Endothelial cell of umbilical vein (primary cell): ENCODE measurements at regions of chr10 and their contacts with region 1.

Region 1: GRCh38 chr10:84537447-84537931 is 209.1 kb downstream of the CCSER2 start:
- DNase-seq: peak; percentile 70
- H3K4me3 ChIP-seq: no peak overlapping the region
- H3K27ac ChIP-seq: no peak overlapping the region
- H3K4me1 ChIP-seq: peaks cover 13% of the 10 kb centered on the region
- H3K27me3 ChIP-seq: no peaks in the 10 kb centered on the region
- CTCF ChIP-seq: peak; percentile 57 to 66
- POLR2A ChIP-seq: no peak

Region 2: DNA sequence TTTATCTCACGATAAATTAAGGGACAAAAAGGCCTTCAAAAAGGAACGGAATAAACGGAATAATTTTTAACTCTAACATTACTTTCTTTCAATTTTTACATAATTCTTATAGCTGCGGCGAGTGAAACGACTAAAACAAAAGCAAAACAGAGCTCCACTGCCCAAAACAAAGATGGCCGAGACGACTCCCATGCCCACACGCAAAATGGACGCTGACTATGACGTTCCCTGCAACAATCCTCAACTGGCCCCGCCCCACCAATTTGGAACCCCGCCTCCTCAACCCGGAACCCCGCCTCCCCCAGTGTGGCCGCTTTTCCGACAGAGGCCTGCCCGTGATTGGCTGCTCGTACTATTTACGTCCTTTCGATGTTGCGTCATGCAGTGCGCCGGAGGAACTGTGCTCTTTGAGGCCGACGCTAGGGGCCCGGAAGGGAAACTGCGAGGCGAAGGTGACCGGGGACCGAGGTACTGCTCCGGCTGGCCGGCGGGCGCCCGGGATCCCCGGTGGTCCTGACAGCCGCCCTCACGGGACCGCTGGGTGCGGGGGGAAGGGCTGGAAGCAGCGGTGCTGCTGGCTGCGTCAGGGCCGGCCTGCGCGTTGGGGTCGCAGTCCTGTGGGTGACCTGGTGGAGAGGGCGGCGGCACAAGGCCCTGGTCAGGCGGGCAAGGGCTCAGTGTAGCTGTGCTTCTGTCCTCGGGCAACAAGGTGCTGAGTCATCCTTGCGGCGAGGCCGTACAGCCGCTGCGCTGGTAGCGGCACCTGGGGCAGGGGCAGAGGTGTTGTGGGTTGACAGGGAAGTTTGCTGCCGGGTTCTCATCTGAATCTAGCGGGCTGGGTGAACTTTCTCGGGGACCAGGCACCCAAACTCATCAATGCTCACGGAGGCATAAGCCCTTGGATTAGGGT is 398.1 kb before region 1 on chr10 and contains the start of gene GHITM:
- CTCF ChIA-PET with region 1: interaction called, 3 read pairs
- POLR2A ChIA-PET with region 1: no interaction called
- dilution Hi-C with region 1: no loop called
- intact Hi-C with region 1: loop called (anchors 5 kb)
- DNase-seq: peak; percentile 99
- H3K4me3 ChIP-seq: peak within 1 kb of the TSS; percentile 68 to 92 (median 71)
- H3K27ac ChIP-seq: peak within 1 kb of the TSS; percentile 78
- H3K4me1 ChIP-seq: peaks cover 12% of the 10 kb centered on the region
- H3K27me3 ChIP-seq: peaks cover 0 to 2% of the 10 kb centered on the region in 2 experiments
- CTCF ChIP-seq: peak; percentile 11 to 54
- POLR2A ChIP-seq: peak; percentile 63
- total RNA-seq, gene GHITM: 113 and 114 TPM in 2 replicates

Region 3: DNA sequence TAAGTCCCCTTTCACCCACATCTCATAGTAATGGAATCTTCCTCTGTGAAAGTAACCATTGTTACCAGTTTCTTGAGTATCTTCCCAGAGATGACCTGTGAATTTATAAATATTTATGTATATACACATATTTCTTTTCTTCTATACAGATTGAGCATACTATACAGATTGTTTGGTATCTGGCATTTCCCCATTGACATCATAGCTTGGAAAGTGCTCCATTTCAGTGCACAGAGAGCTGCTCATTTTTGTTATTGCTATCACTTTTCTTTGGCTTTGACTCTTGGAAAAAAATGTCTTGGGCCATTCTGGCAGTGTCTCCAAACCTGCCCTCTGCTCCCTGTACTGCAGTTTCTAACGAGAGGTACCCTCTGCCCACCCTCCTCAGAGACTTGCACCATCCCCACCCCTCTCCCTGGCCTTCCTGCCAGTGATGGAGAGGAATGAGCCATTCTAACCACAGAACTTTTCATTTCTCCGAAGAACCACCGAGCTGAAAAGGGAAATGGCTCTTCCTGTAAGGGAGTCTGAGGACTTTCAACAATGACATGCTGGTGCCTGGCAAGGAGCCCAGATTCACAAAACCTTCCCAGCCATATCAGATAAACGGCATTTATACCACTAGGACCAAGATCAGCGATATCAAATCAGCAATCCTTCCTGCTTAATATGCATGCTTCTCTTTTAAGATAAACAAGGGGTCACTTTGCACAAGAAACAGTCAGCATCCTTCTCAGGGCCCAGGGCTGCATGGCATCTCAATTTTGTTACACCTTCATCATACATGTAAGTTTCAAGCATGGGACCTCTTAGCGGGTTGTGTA is 228.8 kb before region 1 on chr10:
- CTCF ChIA-PET with region 1: interaction called, 11 read pairs
- POLR2A ChIA-PET with region 1: no interaction called
- dilution Hi-C with region 1: no loop called
- intact Hi-C with region 1: no loop called
- DNase-seq: peak; percentile 93
- H3K4me3 ChIP-seq: peak overlapping the region in 1 of 3 experiments; percentile 10
- H3K27ac ChIP-seq: peak overlapping the region; percentile 84
- H3K4me1 ChIP-seq: peaks cover 35% of the 10 kb centered on the region
- H3K27me3 ChIP-seq: no peaks in the 10 kb centered on the region
- CTCF ChIP-seq: no peak
- POLR2A ChIP-seq: no peak

Region 4: DNA sequence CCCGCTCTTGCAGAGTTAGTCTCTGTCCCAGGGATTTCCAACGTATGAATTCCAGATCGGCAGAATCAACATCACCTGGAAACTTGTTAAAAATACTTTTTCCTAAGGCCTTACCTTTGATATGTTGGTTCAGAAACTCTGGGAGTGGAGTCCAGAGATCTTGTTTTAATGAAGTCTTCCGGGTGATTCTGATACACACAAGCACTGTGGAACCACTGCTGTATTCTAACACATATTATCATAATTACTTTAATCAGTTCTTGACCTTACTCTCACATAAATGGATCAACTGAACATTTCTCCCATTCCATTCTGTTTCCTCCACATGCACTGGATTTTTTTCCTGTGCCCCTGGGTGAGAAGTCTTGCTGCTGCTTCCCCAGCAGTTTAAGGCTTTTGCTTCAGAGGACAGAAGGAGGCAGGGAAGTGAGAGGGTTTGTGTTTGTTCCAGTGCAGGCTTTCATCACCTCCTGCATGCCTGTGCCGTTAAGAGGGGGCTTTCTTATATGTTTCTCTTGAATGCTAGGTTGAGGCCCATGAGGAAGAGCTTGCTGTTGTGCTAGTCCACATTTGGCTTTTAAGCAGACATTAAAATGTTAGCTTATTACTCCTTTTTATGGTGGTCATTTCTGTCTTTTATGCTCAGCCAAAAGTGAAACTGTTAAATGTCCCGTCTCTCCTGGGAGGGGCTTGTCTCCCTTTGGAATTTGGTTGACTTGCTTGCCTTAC is 176.7 kb before region 1 on chr10:
- CTCF ChIA-PET with region 1: interaction called, 14 read pairs
- POLR2A ChIA-PET with region 1: no interaction called
- dilution Hi-C with region 1: no loop called
- intact Hi-C with region 1: no loop called
- DNase-seq: peak; percentile 67
- H3K4me3 ChIP-seq: peak overlapping the region; percentile 2 to 54 (median 28)
- H3K27ac ChIP-seq: no peak overlapping the region
- H3K4me1 ChIP-seq: peaks cover 6% of the 10 kb centered on the region
- H3K27me3 ChIP-seq: no peaks in the 10 kb centered on the region
- CTCF ChIP-seq: no peak
- POLR2A ChIP-seq: no peak

Region 5: GRCh38 chr10:84510121-84510520 is 27.4 kb before region 1 on chr10:
- CTCF ChIA-PET with region 1: interaction called, 26 read pairs
- POLR2A ChIA-PET with region 1: no interaction called
- dilution Hi-C with region 1: no loop called
- intact Hi-C with region 1: no loop called
- DNase-seq: peak; percentile 86
- H3K4me3 ChIP-seq: no peak overlapping the region
- H3K27ac ChIP-seq: peak overlapping the region; percentile 94
- H3K4me1 ChIP-seq: peaks cover 40% of the 10 kb centered on the region
- H3K27me3 ChIP-seq: no peaks in the 10 kb centered on the region
- CTCF ChIP-seq: no peak
- POLR2A ChIP-seq: no peak

Region 6: DNA sequence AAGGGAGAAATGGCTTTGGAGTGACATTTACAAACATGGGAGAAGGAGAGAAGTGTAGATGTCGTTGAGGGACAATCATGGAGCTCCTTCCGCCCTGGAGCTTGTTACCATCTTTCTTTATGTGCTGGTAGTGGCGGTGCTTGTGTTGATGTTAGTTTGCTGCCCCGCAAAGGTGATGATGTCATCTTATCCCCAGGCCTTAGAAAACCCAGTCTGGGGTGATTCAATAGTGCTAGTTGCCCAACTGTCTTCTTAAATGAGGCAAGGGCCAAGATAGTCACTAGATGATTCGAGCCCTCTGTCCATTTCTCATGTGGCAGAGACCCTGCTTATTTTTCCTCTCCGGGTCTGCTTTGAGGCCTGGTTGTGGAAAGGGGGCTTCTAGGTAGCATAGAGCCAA is 68.3 kb after region 1 on chr10:
- CTCF ChIA-PET with region 1: no interaction called
- POLR2A ChIA-PET with region 1: no interaction called
- dilution Hi-C with region 1: no loop called
- intact Hi-C with region 1: no loop called
- DNase-seq: no peak
- H3K4me3 ChIP-seq: no peak overlapping the region
- H3K27ac ChIP-seq: no peak overlapping the region
- H3K4me1 ChIP-seq: no peaks in the 10 kb centered on the region
- H3K27me3 ChIP-seq: no peaks in the 10 kb centered on the region
- CTCF ChIP-seq: no peak
- POLR2A ChIP-seq: no peak

Region 7: DNA sequence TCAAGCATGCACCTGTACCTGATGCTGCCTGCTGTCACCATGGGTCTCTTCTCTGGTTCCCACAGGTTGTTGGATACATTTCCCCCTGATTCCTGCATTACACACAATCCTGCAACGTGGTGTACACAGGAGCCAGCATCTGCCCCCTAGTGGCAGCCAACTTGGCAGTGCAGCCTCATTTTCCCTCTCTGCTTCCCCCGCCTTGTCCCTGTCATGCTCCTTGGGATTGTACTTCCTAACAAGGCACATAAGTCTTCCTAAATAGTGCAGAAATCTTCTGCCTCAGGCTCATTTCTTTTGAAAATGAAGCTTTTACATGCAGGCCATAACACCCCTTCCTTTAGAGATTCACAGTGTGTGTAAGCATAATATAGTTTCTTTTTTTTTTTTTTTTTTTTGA is 178.4 kb after region 1 on chr10:
- CTCF ChIA-PET with region 1: interaction called, 7 read pairs
- POLR2A ChIA-PET with region 1: no interaction called
- dilution Hi-C with region 1: no loop called
- intact Hi-C with region 1: loop called (anchors 1 kb)
- DNase-seq: peak; percentile 33
- H3K4me3 ChIP-seq: no peak overlapping the region
- H3K27ac ChIP-seq: no peak overlapping the region
- H3K4me1 ChIP-seq: no peaks in the 10 kb centered on the region
- H3K27me3 ChIP-seq: no peaks in the 10 kb centered on the region
- CTCF ChIP-seq: peak; percentile 50 to 67
- POLR2A ChIP-seq: no peak